ENCODE measurements at regions of chr6 and their contacts with region 1.

Region 1: DNA sequence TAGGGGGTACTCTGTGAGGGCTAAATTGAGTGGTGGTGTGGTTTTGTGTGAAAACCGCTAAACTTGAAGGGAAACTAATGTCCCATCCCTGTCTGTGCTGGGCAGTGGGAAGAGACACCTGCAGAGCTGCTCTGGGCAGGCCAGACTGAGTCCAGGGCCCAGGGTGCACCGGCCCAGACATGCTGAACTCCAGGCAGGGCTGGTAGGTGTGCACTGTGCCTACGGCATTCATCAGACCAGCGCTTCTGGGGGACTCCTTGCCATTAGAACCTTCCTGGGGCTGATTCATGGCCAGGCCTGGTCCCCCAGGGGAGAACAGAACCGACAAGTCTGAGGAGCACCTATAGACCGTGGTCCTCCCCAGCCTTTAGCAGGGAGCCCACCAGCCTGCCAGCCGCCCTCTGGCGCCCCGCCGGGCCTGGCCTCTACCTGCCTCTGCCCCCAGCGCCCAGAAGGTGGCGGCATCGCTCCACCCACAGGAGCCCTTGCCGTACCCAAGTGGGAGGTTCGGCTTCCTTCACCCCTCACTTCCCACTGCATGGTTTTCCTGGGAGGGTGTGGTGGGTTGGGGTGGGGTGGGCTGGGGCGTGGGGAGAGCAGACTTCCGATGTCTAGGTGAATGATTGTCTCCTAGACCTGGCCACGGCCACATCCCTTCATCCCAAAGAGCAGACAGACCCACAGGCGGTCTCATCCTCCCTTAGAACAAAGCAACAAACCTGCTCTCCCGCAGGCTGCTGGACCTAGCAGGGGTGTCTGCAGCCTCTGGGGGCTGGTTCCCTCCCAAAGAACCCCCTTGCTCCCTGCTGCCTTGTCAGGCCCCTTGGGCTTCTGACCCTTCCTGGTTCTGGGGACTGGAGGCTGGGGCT is 15.5 kb downstream of the CCDC167 start:
- DNase-seq: peak; percentile 82
- ATAC-seq: peak; percentile 78
- H3K4me3 Mint-ChIP-seq: no peak overlapping the region
- H3K27ac Mint-ChIP-seq: no peak overlapping the region
- H3K4me1 Mint-ChIP-seq: peaks cover 21% of the 10 kb centered on the region
- H3K27me3 Mint-ChIP-seq: no peaks in the 10 kb centered on the region
- CTCF ChIP-seq: peak; percentile 72

Region 2: GRCh38 chr6:37332894-37333293 is 151.3 kb before region 1 on chr6:
- CTCF ChIA-PET with region 1: no interaction called
- POLR2A ChIA-PET with region 1: interaction called, 12 read pairs
- DNase-seq: no peak
- ATAC-seq: no peak
- H3K4me3 Mint-ChIP-seq: no peak overlapping the region
- H3K27ac Mint-ChIP-seq: no peak overlapping the region
- H3K4me1 Mint-ChIP-seq: no peaks in the 10 kb centered on the region
- H3K27me3 Mint-ChIP-seq: no peaks in the 10 kb centered on the region
- CTCF ChIP-seq: no peak

Region 3: DNA sequence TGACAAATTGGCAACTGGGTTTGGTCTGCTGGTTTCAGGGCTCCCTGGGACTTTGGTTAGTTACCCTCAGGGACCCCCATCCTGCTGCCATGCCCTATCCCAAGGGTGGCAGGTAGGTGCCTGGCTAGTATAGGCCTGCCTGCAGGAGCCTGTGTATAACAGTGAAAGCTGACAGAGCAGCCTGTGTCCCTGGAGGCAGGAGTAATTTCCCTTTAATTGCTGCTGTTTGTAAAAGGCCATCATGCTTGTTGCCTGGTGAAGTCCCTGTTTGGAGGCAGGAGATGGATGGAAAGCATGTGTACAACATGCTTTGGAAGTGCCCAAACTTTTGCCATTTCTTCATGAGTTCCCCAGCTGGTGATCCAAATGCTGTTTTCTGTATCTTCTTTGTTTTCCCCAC is 21.0 kb before region 1 on chr6:
- CTCF ChIA-PET with region 1: no interaction called
- POLR2A ChIA-PET with region 1: no interaction called
- DNase-seq: no peak
- ATAC-seq: no peak
- H3K4me3 Mint-ChIP-seq: no peak overlapping the region
- H3K27ac Mint-ChIP-seq: no peak overlapping the region
- H3K4me1 Mint-ChIP-seq: no peaks in the 10 kb centered on the region
- H3K27me3 Mint-ChIP-seq: no peaks in the 10 kb centered on the region
- CTCF ChIP-seq: no peak